Activated T-helper 1 cell treated with anti-CD3 and anti-CD28 coated beads, Interleukin-12 subunit alpha, Interleukin-12 subunit beta, Interleukin-2, Interleukin-4 antibody, amounts not matched to agents 30 ng/mL and 10 ng/mL and 1 ng/mL, durations not matched to agents 14 hours and 24 hours and 36 hours (primary cell): ENCODE measurements at regions of chr1 and their contacts with region 1.

Region 1: DNA sequence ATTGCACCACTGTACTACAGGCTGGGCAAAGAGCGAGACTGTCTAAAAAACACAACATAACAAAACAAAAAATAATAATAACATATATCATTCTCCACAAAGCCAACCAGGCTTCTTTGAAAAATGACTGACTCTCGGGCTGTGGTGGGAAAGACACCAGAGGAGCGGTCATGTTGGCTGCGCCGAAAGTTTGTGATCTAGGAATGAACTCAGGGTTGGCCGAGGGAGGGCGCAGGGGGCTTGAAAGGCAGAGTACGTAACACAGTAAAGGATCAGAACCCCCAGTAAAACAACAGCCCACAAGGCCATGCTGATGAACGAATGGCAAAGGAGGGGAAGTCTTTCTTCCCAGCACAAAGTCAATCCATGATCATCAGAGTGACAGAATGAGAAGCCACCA is 4.7 kb downstream of the SLC35E2B start:
- DNase-seq: no peak
- H3K4me3 Mint-ChIP-seq: no peak overlapping the region
- H3K27ac Mint-ChIP-seq: no peak overlapping the region
- H3K4me1 Mint-ChIP-seq: no peaks in the 10 kb centered on the region
- H3K27me3 Mint-ChIP-seq: no peaks in the 10 kb centered on the region

Region 2: DNA sequence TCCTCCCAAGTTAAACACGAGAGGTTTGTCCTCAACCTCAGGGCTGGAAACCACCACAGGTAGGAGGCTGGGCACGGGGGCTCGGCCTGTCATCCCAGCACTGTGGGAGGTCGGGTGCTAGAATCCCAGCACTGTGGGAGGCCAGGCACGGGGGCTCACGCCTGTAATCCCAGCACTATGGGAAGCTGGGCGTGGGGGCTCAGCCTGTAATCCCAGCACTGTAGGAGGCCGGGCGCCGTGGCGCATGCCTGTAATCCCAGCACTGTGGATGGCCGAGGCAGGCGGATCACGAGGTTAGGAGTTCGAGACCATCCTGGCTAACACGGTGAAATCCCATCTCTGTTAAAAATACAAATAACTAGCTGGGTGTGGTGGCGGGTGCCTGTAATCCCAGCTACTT is 43.0 kb after region 1 on chr1:
- intact Hi-C with region 1: no loop called
- DNase-seq: no peak
- H3K4me3 Mint-ChIP-seq: no peak overlapping the region
- H3K27ac Mint-ChIP-seq: no peak overlapping the region
- H3K4me1 Mint-ChIP-seq: peaks cover 14% of the 10 kb centered on the region
- H3K27me3 Mint-ChIP-seq: no peaks in the 10 kb centered on the region

Region 3: GRCh38 chr1:1748686-1749321 is 61.0 kb after region 1 on chr1:
- intact Hi-C with region 1: loop called (anchors 5 kb)
- DNase-seq: no peak
- H3K4me3 Mint-ChIP-seq: peak overlapping the region; percentile 54
- H3K27ac Mint-ChIP-seq: peak overlapping the region; percentile 21
- H3K4me1 Mint-ChIP-seq: no peaks in the 10 kb centered on the region
- H3K27me3 Mint-ChIP-seq: no peaks in the 10 kb centered on the region